CD8-positive, alpha-beta T cell (primary cell): ENCODE measurements at regions of chr7 and their contacts with region 1.

Region 1: GRCh38 chr7:77745746-77746145 is 49.5 kb downstream of the RSBN1L start:
- DNase-seq: no peak
- ATAC-seq: no peak
- H3K4me3 ChIP-seq: no peak overlapping the region
- H3K4me3 Mint-ChIP-seq: no peak overlapping the region
- H3K27ac ChIP-seq: no peak overlapping the region
- H3K27ac Mint-ChIP-seq: no peak overlapping the region
- H3K4me1 ChIP-seq: peaks cover 4% of the 10 kb centered on the region
- H3K4me1 Mint-ChIP-seq: peaks cover 46% of the 10 kb centered on the region
- H3K27me3 ChIP-seq: no peaks in the 10 kb centered on the region
- H3K27me3 Mint-ChIP-seq: no peaks in the 10 kb centered on the region
- CTCF ChIP-seq: no peak

Region 2: GRCh38 chr7:77644774-77645173 is 101.0 kb before region 1 on chr7:
- CTCF ChIA-PET with region 1: no interaction called
- POLR2A ChIA-PET with region 1: no interaction called
- intact Hi-C with region 1: no loop called
- DNase-seq: no peak
- ATAC-seq: no peak
- H3K4me3 ChIP-seq: no peak overlapping the region
- H3K4me3 Mint-ChIP-seq: no peak overlapping the region
- H3K27ac ChIP-seq: no peak overlapping the region
- H3K27ac Mint-ChIP-seq: no peak overlapping the region
- H3K4me1 ChIP-seq: no peaks in the 10 kb centered on the region
- H3K4me1 Mint-ChIP-seq: no peaks in the 10 kb centered on the region
- H3K27me3 ChIP-seq: no peaks in the 10 kb centered on the region
- H3K27me3 Mint-ChIP-seq: no peaks in the 10 kb centered on the region
- CTCF ChIP-seq: no peak

Region 3: GRCh38 chr7:77727936-77728701 is 17.6 kb before region 1 on chr7:
- CTCF ChIA-PET with region 1: no interaction called
- POLR2A ChIA-PET with region 1: no interaction called
- intact Hi-C with region 1: loop called in 1 of 2 experiments (anchors 1 kb)
- DNase-seq: peak in 4 of 9 experiments; percentile 9 to 54 (median 32)
- ATAC-seq: peak; percentile 88
- H3K4me3 ChIP-seq: no peak overlapping the region
- H3K4me3 Mint-ChIP-seq: peak overlapping the region; percentile 35
- H3K27ac ChIP-seq: peak overlapping the region in 1 of 2 experiments; percentile 29
- H3K27ac Mint-ChIP-seq: peak overlapping the region; percentile 89
- H3K4me1 ChIP-seq: peaks cover 31% of the 10 kb centered on the region
- H3K4me1 Mint-ChIP-seq: peaks cover 60% of the 10 kb centered on the region
- H3K27me3 ChIP-seq: no peaks in the 10 kb centered on the region
- H3K27me3 Mint-ChIP-seq: no peaks in the 10 kb centered on the region
- CTCF ChIP-seq: no peak